ENCODE measurements at regions of chr13 and their contacts with region 1.

Region 1: DNA sequence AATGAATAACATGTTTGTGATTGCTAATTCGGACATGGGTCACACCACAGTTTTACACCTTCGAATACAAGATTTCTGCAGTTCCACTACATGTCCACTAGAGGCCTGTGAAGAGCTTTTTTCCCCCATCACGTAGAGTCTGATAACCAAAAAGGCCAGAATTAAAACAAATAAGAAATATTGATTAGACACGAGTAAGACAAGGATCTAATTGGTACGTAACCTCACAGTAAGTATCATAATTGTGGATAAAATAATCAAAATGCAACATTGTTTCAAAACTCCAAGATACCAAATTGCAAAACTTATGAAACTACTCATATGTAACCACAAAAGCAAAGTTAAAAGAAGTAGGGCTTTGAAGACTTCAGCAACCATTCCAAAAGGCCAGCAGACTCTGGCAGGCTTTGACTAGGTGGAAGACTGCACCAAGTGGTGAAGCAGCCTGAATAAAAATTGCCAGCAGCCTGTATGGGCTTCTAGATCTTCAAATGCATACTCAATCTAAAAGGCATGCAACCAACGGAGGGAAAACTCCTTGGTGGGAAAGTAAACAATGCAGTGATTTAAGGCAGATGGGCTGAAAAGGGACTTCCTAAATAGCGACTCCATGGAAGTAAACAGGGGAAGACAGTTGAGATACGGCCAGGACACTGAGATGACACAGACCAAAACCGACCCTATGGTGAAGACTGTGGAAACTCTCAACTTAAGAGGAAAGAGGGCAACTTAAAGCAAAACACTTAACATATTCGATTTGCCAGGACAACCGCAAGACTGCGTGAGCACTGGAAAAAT is 56.7 kb downstream of the STARD13 start:
- DNase-seq: no peak
- ATAC-seq: peak in 2 of 4 donors; percentile 42 to 43
- H3K4me3 ChIP-seq: no peak overlapping the region
- H3K27ac ChIP-seq: peak overlapping the region; percentile 14 to 75 (median 63)
- H3K4me1 ChIP-seq: peaks cover 7 to 74% (median 47%) of the 10 kb centered on the region in 12 donors
- H3K27me3 ChIP-seq: no peaks in the 10 kb centered on the region
- CTCF ChIP-seq: peak; percentile 83 to 98 (median 93)
- POLR2A ChIP-seq: no peak

Region 2: GRCh38 chr13:32586080-32586900 is 642.6 kb before region 1 on chr13 and contains the start of gene PDS5B:
- intact Hi-C with region 1: loop called in 1 of 10 experiments (anchors 10 kb)
- DNase-seq: peak; percentile 95 to 98 (median 96)
- ATAC-seq: peak; percentile 95 to 99 (median 96)
- H3K4me3 ChIP-seq: peak within 1 kb of the TSS; percentile 66 to 95 (median 84)
- H3K27ac ChIP-seq: peak within 1 kb of the TSS; percentile 86 to 96 (median 93)
- H3K4me1 ChIP-seq: peaks cover 0 to 38% (median 27%) of the 10 kb centered on the region in 12 donors
- H3K27me3 ChIP-seq: no peaks in the 10 kb centered on the region
- CTCF ChIP-seq: peak; percentile 66 to 97 (median 94)
- POLR2A ChIP-seq: peak in 1 of 2 donors; percentile 81
- total RNA-seq, gene PDS5B: 12.0 to 28.8 (median 19.4) TPM

Region 3: DNA sequence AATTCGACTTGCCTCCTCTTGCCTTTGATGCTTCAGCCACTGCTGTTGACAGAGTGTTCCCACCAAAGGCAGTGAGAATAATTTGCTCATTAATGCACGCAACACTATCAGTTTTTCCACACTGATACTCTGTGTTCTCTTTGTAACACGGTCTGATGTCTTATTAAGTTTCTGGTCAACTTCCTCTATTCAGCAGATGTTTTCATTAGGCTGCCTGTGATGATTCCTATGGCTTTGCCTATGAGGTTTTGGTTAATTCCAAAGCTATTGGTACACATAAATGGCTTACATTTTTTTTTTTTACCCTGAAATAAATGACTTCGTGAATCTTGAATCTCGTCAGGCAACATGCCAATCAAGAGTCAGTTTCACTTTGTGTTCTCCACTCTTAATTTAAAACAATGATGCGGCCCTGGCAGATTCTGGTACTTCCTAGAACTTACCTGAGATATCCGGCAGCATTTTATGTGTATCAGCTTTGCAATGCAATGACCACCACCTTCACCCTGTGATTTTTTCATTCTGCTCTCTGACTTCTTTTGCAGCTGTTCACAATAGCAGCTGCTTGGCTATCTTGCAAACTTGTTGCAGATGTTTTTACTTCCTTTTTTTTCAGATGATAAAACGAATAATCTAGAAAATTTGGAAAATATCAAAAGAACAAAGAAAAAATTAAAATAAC is 240.1 kb before region 1 on chr13:
- intact Hi-C with region 1: no loop called
- DNase-seq: no peak
- ATAC-seq: peak in 3 of 4 donors; percentile 31 to 63 (median 36)
- H3K4me3 ChIP-seq: peak overlapping the region in 8 of 12 donors; percentile 6 to 46 (median 20)
- H3K27ac ChIP-seq: peak overlapping the region in 5 of 12 donors; percentile 8 to 59 (median 16)
- H3K4me1 ChIP-seq: peaks cover 0 to 17% (median 7%) of the 10 kb centered on the region in 12 donors
- H3K27me3 ChIP-seq: no peaks in the 10 kb centered on the region
- CTCF ChIP-seq: no peak
- POLR2A ChIP-seq: no peak

Region 4: GRCh38 chr13:33265133-33265532 is 36.3 kb after region 1 on chr13:
- intact Hi-C with region 1: loop called in 1 of 10 experiments (anchors 5 kb)
- DNase-seq: no peak
- ATAC-seq: no peak
- H3K4me3 ChIP-seq: no peak overlapping the region
- H3K27ac ChIP-seq: peak overlapping the region in 6 of 12 donors; percentile 0 to 76 (median 60)
- H3K4me1 ChIP-seq: peaks cover 17 to 97% (median 67%) of the 10 kb centered on the region in 12 donors
- H3K27me3 ChIP-seq: no peaks in the 10 kb centered on the region
- CTCF ChIP-seq: no peak
- POLR2A ChIP-seq: no peak

Region 5: DNA sequence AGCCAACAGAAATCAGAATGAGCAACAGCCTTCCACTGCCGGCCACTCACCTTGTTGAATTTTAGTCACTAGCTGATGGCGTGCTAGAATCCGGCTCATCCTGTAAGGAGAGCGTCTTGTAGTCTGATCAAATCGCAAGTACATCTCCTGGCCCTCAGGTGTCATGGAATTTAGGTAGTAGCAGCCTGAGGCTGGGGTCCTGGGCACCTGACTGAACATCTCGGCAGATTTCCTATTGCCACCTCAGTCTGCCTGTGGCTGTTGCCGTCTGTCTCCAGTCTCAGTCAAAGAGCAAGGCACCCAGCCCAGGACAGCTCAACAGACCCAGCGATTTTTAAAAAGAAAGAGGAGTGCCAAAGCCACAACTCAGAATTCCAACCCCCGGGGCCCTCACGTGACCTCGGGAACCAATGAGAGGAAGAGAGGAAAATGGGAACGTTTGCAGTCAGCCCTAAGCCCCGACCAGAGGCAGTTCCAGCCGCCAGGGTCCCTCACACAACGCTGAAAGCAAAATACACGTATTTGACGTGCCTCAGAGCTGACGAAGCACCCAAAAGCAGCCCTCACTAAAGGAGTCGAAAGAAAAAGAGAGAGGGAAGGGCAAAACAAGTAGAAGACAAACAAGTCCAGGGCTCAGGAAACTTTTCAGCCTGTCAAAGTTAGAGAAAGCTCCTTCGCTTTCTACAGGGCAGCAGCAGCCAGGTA is 56.7 kb after region 1 on chr13 and contains the start of gene STARD13:
- intact Hi-C with region 1: loop called in 7 of 10 experiments (anchors 1 to 10 kb)
- DNase-seq: peak; percentile 92 to 96 (median 95)
- ATAC-seq: peak; percentile 93 to 97 (median 95)
- H3K4me3 ChIP-seq: peak within 1 kb of the TSS; percentile 50 to 84 (median 68)
- H3K27ac ChIP-seq: peak within 1 kb of the TSS; percentile 89 to 98 (median 96)
- H3K4me1 ChIP-seq: peaks cover 0 to 56% (median 33%) of the 10 kb centered on the region in 12 donors
- H3K27me3 ChIP-seq: no peaks in the 10 kb centered on the region
- CTCF ChIP-seq: peak in 11 of 12 donors; percentile 11 to 68 (median 46)
- POLR2A ChIP-seq: peak in 1 of 2 donors; percentile 95
- total RNA-seq, gene STARD13: 18.6 to 39.2 (median 31.6) TPM

Region 6: GRCh38 chr13:33312150-33312860 is 83.5 kb after region 1 on chr13:
- intact Hi-C with region 1: loop called in 2 of 10 experiments (anchors 1 to 5 kb)
- DNase-seq: no peak
- ATAC-seq: peak in 3 of 4 donors; percentile 39 to 51 (median 42)
- H3K4me3 ChIP-seq: no peak overlapping the region
- H3K27ac ChIP-seq: peak overlapping the region in 1 of 12 donors; percentile 26
- H3K4me1 ChIP-seq: peaks cover 0 to 34% (median 4%) of the 10 kb centered on the region in 12 donors
- H3K27me3 ChIP-seq: no peaks in the 10 kb centered on the region
- CTCF ChIP-seq: peak in 11 of 12 donors; percentile 19 to 58 (median 42)
- POLR2A ChIP-seq: no peak

Region 7: GRCh38 chr13:33509642-33510229 is 280.9 kb after region 1 on chr13:
- intact Hi-C with region 1: loop called in 1 of 10 experiments (anchors 10 kb)
- DNase-seq: peak; percentile 33 to 74 (median 61)
- ATAC-seq: peak; percentile 86 to 94 (median 91)
- H3K4me3 ChIP-seq: peak overlapping the region in 1 of 12 donors; percentile 3
- H3K27ac ChIP-seq: peak overlapping the region; percentile 83 to 94 (median 90)
- H3K4me1 ChIP-seq: peaks cover 7 to 42% (median 27%) of the 10 kb centered on the region in 12 donors
- H3K27me3 ChIP-seq: no peaks in the 10 kb centered on the region
- CTCF ChIP-seq: peak in 2 of 12 donors; percentile 6 to 25
- POLR2A ChIP-seq: peak in 1 of 2 donors; percentile 41

Region 8: DNA sequence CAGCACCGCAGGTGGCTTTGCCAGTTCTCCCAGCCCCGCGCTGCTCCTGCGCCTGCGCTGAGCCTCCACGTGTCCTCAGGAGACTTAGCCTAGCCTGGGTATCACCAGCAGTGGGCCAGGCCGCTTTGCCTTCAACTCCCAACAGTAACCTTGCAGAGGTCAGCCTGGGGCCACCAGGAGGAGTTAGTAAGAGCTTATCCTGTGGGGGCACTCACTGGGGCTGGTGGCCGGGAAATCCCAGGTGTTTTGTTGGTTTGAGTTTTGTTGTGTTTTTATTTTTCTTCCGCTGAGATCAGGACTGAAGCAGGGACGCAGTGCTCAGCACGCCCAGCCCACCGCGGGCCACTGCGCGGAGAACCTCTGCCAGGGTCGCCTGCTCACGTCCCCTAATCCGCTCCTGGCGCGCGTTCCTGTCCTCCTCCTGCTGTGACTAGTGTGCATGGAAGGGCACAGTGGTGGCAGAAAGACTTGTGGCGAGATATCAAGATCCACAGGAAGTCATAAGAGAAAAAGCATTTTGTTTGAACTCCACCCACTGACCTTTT is 381.7 kb after region 1 on chr13:
- intact Hi-C with region 1: loop called in 1 of 10 experiments (anchors 10 kb)
- DNase-seq: peak; percentile 64 to 89 (median 85)
- ATAC-seq: peak; percentile 86 to 88 (median 87)
- H3K4me3 ChIP-seq: peak overlapping the region in 11 of 12 donors; percentile 3 to 54 (median 40)
- H3K27ac ChIP-seq: peak overlapping the region; percentile 85 to 98 (median 92)
- H3K4me1 ChIP-seq: peaks cover 0 to 55% (median 27%) of the 10 kb centered on the region in 12 donors
- H3K27me3 ChIP-seq: no peaks in the 10 kb centered on the region
- CTCF ChIP-seq: peak in 4 of 12 donors; percentile 11 to 38 (median 19)
- POLR2A ChIP-seq: no peak

Region 9: DNA sequence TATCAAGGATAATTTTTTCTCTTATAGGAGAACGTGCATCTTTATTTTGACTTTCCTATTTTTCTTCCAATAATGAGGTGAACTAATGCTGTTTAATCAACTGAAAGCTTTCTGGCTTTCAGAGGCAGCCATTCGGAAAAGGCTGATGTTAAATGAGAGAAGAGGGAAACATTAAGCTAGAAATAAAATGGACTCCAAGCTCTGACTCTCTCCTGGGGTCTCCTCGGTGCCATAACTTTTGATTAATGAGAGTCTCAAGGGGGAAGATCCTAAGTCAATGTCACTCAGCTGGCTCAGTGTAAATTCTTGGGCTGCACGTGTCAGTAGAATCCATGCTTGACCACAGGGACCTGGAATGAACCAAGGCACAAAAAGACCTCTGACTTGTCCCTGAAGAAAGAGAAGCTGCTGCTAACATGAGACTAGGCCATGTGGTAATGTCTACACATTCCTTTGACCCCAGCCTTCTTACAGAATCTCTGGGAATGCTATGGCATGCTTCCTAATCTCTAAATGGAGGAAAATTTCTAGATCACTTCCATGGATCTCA is 436.9 kb after region 1 on chr13:
- intact Hi-C with region 1: no loop called
- DNase-seq: no peak
- ATAC-seq: no peak
- H3K4me3 ChIP-seq: no peak overlapping the region
- H3K27ac ChIP-seq: no peak overlapping the region
- H3K4me1 ChIP-seq: peaks cover 0 to 4% (median 0%) of the 10 kb centered on the region in 12 donors
- H3K27me3 ChIP-seq: no peaks in the 10 kb centered on the region
- CTCF ChIP-seq: no peak
- POLR2A ChIP-seq: no peak